PC-9 (cell line): ENCODE measurements at regions of chr1 and their contacts with region 1.

Region 1: GRCh38 chr1:99808391-99809115 is 41.6 kb upstream of the AGL start:
- DNase-seq: peak; percentile 27 to 83
- H3K4me3 ChIP-seq: peak overlapping the region; percentile 4; the same call in 1 of the 2 replicates
- H3K27ac ChIP-seq: no peak overlapping the region
- H3K4me1 ChIP-seq: no peaks in the 10 kb centered on the region; the same call in 1 of the 2 replicates
- H3K27me3 ChIP-seq: peaks cover 16% of the 10 kb centered on the region; the same call in 1 of the 2 replicates
- CTCF ChIP-seq: peak; percentile 92

Region 2: DNA sequence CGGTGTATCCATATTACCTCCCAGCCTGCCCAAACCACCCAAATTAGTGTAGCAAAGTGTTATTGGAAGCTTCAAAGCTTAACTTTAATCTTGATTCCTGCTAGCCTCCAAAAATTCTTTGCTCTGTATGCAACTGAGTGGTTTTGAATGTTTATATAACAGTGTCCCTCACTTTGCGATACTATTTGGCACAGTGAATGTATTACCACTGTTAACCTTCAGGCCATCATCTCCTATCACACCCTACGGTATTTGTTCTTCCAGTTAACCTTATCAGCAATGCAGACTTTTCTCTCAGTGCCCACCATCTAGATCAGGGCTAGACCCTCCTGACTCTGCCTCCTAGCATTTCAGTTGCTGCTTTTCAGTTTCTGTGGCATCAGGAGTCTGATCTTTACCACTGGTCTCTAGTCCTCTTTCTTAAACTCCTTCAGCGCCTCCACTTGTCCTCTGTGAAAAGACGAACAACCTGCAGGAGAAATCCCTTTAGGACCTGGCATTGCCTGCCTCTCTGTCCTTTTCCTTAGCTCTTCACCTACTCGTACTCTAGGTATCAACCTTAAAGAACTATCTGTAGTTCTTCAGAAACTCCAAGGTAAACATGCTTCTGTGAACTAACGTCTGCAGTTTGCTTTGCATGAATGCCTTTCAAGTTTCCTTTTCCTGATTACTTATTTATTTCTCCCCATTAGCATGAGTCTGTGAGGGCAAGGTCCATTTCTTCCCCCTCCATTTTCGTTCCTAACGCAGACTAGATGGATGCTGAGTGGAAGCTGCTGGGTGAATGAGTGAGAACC is 1075.4 kb before region 1 on chr1:
- CTCF ChIA-PET with region 1: no interaction called
- POLR2A ChIA-PET with region 1: interaction called, 11 read pairs
- intact Hi-C with region 1: no loop called
- DNase-seq: no peak
- H3K4me3 ChIP-seq: no peak overlapping the region
- H3K27ac ChIP-seq: no peak overlapping the region
- H3K4me1 ChIP-seq: no peaks in the 10 kb centered on the region
- H3K27me3 ChIP-seq: no peaks in the 10 kb centered on the region
- CTCF ChIP-seq: no peak

Region 3: GRCh38 chr1:100037927-100038659 is 229.5 kb after region 1 on chr1:
- CTCF ChIA-PET with region 1: no interaction called
- POLR2A ChIA-PET with region 1: interaction called, 8 read pairs
- intact Hi-C with region 1: loop called (anchors 2 kb)
- DNase-seq: peak; percentile 73 to 83
- H3K4me3 ChIP-seq: peak overlapping the region; percentile 90
- H3K27ac ChIP-seq: peak overlapping the region; percentile 84
- H3K4me1 ChIP-seq: peaks cover 33% of the 10 kb centered on the region
- H3K27me3 ChIP-seq: no peaks in the 10 kb centered on the region
- CTCF ChIP-seq: no peak; the same call in 1 of the 2 replicates

Region 4: DNA sequence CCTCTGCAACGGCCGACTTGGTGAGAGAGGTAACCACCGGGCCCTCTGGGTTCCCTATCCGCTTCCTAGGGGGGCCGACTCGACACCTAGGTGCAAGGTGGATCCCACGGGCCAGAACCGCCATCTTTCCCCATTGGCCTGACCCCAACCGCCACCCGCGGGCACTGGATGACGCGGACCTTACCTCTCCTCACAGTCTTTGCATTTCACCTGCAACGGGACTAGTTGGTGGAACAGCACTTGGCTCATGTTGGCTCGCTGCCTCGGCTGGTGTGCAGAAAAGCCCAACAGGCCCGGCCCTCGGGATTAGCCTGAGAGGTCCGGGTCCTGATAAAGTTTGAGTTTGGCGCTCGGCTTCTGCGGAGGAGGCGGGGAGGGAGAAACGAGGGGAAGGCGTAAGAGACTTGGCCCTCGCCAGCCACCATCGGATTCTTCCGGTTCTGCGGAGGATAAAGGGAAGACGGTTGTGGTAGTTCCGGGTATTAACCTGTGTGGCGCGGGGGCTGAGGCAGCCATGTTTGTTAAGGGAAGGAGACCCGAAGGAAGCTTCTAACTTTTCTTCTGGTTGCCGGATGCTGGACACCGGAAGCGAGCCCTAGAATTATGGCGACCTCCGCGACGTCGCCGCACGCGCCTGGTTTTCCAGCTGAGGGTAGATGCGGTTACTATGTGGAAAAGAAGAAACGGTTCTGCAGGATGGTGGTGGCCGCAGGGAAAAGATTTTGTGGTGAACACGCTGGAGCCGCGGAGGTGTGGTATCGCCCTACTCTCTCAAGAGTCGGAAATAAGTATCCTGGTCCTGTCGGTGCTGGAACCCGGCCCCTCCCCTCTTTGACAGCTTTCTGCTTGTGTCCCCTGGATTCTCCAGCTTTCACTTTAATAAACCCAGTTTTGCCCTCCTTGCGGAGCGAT is 324.3 kb after region 1 on chr1 and contains the starts of genes SASS6 and TRMT13:
- CTCF ChIA-PET with region 1: no interaction called
- POLR2A ChIA-PET with region 1: no interaction called
- intact Hi-C with region 1: loop called (anchors 2 kb)
- DNase-seq: peak; percentile 91 to 98
- H3K4me3 ChIP-seq: peak within 1 kb of the TSS; percentile 87
- H3K27ac ChIP-seq: peak within 1 kb of the TSS; percentile 40
- H3K4me1 ChIP-seq: peaks cover 34% of the 10 kb centered on the region
- H3K27me3 ChIP-seq: no peaks in the 10 kb centered on the region
- CTCF ChIP-seq: no peak
- total RNA-seq, gene SASS6: 5.1 and 8.7 TPM in 2 replicates
- total RNA-seq, gene TRMT13: 7.3 and 14.2 TPM in 2 replicates

Region 5: GRCh38 chr1:100277866-100278265 is 469.3 kb after region 1 on chr1:
- CTCF ChIA-PET with region 1: no interaction called
- POLR2A ChIA-PET with region 1: no interaction called
- intact Hi-C with region 1: loop called (anchors 10 kb)
- DNase-seq: no peak
- H3K4me3 ChIP-seq: no peak overlapping the region
- H3K27ac ChIP-seq: no peak overlapping the region
- H3K4me1 ChIP-seq: no peaks in the 10 kb centered on the region
- H3K27me3 ChIP-seq: no peaks in the 10 kb centered on the region
- CTCF ChIP-seq: no peak

Region 6: GRCh38 chr1:100866041-100866900 is 1057.7 kb after region 1 on chr1:
- CTCF ChIA-PET with region 1: no interaction called
- POLR2A ChIA-PET with region 1: no interaction called
- intact Hi-C with region 1: loop called (anchors 1 kb)
- DNase-seq: peak in 1 of 2 experiments; percentile 59
- H3K4me3 ChIP-seq: no peak overlapping the region
- H3K27ac ChIP-seq: no peak overlapping the region
- H3K4me1 ChIP-seq: 0 out of 2 replicates have a peak, but pooled peaks cover 4% of the 10 kb centered on the region
- H3K27me3 ChIP-seq: no peaks in the 10 kb centered on the region
- CTCF ChIP-seq: peak; percentile 91